ENCODE measurements at regions of chr5 and their contacts with region 1.

Region 1: GRCh38 chr5:153974131-153974812 is 64.4 kb downstream of the FAM114A2 start:
- DNase-seq: peak; percentile 56
- H3K4me3 Mint-ChIP-seq: no peak overlapping the region
- H3K27ac Mint-ChIP-seq: no peak overlapping the region
- H3K4me1 Mint-ChIP-seq: no peaks in the 10 kb centered on the region
- H3K27me3 Mint-ChIP-seq: peaks cover 34% of the 10 kb centered on the region

Region 2: DNA sequence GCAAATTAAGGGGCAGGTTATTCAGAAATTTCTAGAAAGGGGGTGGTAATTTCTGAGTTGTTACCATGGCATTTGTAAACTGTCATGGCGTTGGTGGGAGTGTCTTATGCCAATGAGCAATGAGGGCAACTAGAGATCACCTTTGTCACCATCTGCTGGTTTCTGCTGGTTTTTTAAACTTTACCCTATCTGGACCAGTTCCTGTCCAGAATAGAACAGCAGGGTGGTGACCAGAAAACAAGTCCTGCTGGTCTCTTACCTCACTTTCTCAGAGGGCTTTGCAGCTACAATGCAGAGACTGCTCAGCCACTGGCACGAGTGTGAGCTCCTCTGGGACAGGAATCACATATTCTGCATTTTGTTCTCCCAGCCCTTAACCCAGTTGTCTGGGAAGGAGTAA is 13.0 kb after region 1 on chr5:
- CTCF ChIA-PET with region 1: interaction called, 18 read pairs
- DNase-seq: no peak
- H3K4me3 Mint-ChIP-seq: no peak overlapping the region
- H3K27ac Mint-ChIP-seq: no peak overlapping the region
- H3K4me1 Mint-ChIP-seq: no peaks in the 10 kb centered on the region
- H3K27me3 Mint-ChIP-seq: no peaks in the 10 kb centered on the region

Region 3: GRCh38 chr5:154047324-154047723 is 73.1 kb after region 1 on chr5:
- CTCF ChIA-PET with region 1: no interaction called
- DNase-seq: no peak
- H3K4me3 Mint-ChIP-seq: no peak overlapping the region
- H3K27ac Mint-ChIP-seq: no peak overlapping the region
- H3K4me1 Mint-ChIP-seq: peaks cover 26% of the 10 kb centered on the region
- H3K27me3 Mint-ChIP-seq: no peaks in the 10 kb centered on the region

Region 4: GRCh38 chr5:154189819-154190594 is 215.7 kb after region 1 on chr5:
- CTCF ChIA-PET with region 1: interaction called, 14 read pairs
- DNase-seq: peak; percentile 87
- H3K4me3 Mint-ChIP-seq: peak overlapping the region; percentile 82
- H3K27ac Mint-ChIP-seq: peak overlapping the region; percentile 72
- H3K4me1 Mint-ChIP-seq: peaks cover 34% of the 10 kb centered on the region
- H3K27me3 Mint-ChIP-seq: peaks cover 13% of the 10 kb centered on the region

Region 5: DNA sequence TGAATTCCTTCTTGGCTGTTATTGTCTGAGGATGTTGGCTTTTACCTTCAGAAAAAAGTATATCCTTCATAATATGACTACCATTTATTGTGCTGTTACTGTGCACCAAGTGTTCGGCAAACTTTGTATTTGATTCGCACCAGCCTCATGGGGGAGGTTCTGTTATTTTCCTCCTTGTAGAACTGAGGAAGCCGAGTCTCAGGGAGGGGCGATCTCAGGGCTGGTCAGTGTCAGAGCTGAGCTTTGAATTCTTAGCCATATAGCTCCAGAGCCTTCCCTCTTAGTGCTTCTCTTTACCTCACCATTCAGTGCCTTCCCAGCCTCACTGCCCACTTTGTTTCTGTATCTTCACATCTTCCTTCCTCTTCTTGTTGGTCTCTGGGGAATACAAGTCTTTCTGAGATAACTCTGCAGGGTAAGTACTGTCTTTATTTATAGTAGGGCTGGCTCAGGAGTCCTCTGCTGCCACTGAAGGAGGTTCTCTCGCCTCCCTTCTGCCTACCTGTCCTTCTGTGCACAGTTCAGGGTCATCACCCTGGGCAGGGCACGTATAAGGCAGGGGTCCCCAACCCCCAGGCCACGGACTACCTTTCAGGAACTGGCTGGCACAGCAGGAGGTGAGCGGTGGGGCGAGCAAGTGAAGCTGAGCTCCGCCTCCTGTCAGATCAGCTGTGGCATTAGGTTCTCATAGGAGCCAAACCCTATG is 264.7 kb after region 1 on chr5:
- CTCF ChIA-PET with region 1: interaction called, 12 read pairs
- DNase-seq: no peak
- H3K4me3 Mint-ChIP-seq: no peak overlapping the region
- H3K27ac Mint-ChIP-seq: no peak overlapping the region
- H3K4me1 Mint-ChIP-seq: peaks cover 14% of the 10 kb centered on the region
- H3K27me3 Mint-ChIP-seq: no peaks in the 10 kb centered on the region

Region 6: DNA sequence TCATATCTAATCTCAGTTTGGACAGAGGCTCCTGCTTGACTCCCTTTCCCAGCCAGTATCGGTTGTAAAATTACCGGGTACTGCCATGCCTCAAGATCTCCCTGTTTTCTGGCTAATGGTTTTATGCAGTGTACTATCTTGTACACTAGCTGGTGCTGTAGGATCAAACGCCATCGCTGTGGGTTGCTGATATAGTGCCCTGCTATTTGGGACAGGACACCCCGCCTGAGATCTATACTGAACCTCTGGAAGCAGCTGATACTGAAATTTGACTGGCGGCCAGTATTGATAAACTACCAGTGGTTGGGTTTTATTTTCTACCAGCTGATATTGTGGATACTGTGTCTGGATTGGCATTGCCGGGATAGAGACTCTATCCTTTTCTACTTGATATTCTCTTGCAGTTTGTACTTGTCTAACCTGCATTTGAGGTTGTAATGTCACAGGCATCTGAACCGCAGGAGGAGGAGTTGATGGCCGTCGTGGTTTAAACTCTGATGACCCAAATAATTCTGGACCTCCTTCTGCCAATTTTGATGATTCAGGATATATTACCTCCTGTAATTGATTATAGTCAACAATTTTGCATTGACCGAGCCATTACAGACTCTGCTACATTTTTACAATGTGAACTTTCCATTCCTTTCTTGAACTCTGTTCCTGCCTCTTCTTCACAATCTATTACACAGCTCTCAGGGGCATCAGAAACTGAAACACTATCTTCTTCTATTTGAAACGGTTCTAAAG is 668.4 kb after region 1 on chr5:
- CTCF ChIA-PET with region 1: interaction called, 10 read pairs
- DNase-seq: peak; percentile 23
- H3K4me3 Mint-ChIP-seq: no peak overlapping the region
- H3K27ac Mint-ChIP-seq: no peak overlapping the region
- H3K4me1 Mint-ChIP-seq: peaks cover 12% of the 10 kb centered on the region
- H3K27me3 Mint-ChIP-seq: peaks cover 38% of the 10 kb centered on the region